GM10248 (cell line): ENCODE measurements at regions of chr1 and their contacts with region 1.

Region 1: DNA sequence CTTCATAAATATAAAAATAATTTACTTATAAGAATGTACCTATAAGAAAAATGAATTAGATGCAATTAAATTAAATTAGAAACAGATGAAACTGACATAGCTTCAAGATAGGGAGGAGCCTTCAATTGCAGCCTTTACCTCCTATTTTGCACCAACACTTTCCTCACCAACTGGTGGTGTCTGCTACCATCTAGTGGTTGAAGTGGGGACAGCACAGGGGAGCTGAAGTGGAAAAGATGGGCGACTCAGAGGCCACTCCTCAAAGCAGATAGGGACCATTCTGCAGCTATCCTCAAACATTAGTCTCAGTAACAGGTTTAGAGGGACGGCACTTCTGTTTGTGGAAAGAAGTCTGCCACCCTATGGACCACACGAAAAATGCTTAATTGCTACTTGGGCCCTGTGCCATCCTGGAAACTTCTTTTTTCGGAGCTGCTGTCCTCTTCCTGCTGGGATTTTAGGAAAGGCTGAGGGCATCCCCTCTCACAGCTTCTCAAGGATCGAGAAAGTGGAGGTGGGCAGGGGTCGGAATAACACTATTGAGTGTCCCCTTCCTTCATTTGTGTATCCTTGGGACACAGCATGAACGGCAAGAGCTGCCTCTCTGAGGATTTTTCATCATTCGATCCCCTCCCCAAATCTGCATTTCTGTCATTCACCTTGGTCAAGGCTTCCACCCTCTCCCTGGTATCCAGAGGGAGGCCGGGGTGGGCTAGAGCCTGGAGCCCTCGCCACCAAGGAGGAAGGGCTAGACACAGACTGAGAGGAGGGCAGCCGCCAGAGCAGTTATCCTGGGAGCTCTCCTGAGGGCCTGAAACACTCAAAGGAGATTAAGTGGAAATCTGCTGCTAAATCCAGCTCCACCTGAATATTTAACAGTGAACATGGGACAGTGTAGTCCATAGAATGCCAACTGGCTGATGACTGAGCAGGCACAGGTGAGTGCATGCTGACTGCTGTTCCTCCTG is 9.6 kb downstream of the PROK1 start:
- DNase-seq: peak; percentile 82
- CTCF ChIP-seq: peak; percentile 97

Region 2: GRCh38 chr1:110292031-110292741 is 168.4 kb before region 1 on chr1:
- CTCF ChIA-PET with region 1: interaction called, 11 read pairs
- POLR2A ChIA-PET with region 1: no interaction called
- DNase-seq: no peak
- CTCF ChIP-seq: no peak

Region 3: DNA sequence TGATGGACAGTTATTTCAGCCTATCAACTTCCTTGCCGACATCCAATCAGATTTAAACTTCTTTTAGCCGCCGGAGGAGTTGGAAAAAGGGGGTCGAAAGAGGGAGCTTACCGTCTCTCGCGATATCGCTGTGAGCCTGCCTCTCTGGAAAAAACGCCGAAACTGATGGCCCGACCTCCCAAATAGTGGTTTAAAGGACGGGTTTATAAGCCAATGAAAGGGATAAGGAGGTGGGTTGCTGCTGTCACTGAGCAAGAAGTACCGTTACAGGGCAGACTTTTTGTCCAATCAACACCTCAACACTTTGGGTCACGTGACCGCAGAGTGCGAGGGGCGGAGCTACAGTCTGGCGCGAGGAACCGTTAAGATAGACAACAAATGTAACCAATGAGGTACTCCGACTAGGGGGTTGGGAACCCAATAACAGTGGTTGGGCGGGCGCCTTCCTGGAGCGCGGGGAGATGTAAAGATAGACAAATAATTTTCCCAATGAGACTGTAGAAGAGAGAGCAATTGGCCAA is 121.6 kb before region 1 on chr1 and contains the start of gene RBM15:
- CTCF ChIA-PET with region 1: interaction called, 10 read pairs
- POLR2A ChIA-PET with region 1: no interaction called
- DNase-seq: peak; percentile 96
- CTCF ChIP-seq: no peak

Region 4: DNA sequence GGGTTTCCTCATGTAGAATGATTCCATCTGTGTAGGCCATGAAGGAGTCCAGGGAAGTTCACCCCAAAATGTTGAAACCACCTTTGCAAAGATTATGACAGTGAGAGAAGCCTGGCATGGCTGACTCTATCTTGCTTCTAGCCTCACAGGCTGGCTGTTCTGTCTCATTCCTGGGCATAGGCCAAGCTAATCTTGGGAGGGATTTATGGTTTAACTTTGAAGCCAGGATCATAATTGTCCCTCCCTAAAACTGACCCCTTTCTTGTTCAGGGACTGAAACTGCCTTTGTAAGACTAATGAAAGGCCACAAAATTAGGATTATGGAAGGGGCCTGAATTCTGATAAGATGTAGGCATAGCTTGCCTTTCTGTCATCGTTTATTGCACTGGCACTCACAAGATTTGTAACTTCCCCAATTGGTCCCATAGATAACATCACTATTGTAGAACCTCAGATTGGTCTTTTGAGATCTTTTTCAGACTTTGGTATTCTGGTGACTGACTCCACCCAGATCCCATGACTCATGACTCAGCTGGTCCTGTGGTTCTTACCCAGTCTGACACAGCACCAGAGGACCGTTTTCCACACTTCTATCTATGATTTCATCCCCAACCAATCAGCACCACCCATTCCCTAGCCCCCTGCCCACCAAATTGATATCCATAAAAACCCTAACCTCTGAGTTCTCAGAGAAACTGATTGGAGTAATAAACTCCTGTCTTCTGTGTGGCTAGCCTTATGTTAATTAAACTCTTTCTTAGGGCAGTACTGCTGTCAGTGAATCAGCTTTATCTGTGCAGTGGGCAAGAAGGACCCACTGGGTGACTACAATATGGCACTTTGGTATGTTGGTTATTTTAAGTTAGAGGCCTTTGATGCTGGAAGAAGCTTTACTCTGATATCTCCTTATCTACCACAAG is 39.4 kb before region 1 on chr1:
- CTCF ChIA-PET with region 1: interaction called, 17 read pairs
- POLR2A ChIA-PET with region 1: no interaction called
- DNase-seq: no peak
- CTCF ChIP-seq: no peak

Region 5: DNA sequence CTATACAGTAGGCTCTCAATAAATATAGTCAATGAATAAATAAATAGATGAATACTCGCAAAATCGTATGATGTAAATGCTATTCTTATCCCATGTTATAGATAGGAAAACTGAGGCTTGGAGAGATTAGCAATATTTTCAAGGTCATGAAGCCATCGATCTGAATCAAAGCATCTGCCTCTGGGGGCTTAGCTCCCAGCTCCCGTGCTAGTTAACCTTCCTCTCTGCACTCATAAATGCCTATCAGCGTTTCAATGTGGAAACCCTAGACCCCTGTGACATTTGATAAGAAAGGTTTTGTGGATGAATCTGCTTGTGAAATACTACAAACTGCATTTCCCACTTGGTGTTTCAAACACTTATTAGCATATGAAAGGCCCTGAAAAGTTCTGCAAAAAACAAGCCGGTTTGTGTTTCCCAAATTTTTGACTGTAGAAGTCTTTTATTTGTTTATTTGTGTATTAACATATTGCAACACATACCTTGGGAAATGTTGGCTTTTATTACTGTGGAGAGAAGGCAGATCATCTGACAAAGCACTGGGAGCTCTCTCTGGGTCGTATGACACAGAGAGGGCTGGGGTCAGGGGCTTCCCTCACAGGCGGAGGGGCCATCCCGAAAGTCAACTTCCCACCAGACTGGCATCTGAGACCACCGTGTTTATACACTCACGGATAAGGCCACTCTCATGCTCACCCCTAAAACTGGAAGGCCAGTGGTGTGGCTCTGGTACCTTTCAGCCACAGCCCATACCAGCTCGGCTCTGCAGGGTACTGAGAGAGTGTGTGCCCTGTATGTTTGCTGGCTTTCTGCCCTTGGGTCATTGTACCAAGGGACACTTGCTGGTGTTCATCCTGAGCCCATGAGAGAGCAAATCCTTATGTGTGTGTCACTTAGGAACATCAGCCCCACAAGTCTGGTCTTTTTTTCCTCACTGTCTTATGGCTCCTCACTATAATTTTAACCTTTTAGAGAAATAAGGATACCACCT is 10.6 kb before region 1 on chr1:
- CTCF ChIA-PET with region 1: interaction called, 24 read pairs
- POLR2A ChIA-PET with region 1: no interaction called
- DNase-seq: no peak
- CTCF ChIP-seq: no peak